Head of caudate nucleus (tissue), 42 donors: ENCODE measurements at regions of chr6 and their contacts with region 1.

Region 1: DNA sequence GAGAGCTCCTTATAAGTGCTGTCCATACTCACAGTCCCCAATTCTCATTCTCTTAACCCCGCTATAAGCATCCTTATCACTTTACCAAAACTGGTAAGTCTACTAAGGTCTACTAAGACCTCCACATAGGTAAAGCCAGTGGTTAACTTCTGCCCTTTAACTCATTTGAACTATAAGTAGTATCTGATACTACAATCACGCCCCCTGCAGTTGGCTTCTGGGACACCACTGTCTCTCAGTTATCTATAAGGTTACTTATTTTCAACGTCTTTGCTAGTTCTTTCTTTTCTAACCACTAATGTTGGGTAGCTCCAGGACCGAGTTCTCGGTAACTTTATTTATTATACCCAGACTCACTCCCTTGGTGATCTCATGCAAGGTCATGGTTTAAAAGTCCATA is 142.6 kb downstream of the ARHGAP18 start:
- DNase-seq: peak in 37 of 42 donors; percentile 5 to 70 (median 34)

Region 2: GRCh38 chr6:129498950-129499842 is 68.2 kb before region 1 on chr6:
- intact Hi-C with region 1: loop called (anchors 5 kb)
- DNase-seq: peak in 13 of 42 donors; percentile 11 to 66 (median 32)

Region 3: DNA sequence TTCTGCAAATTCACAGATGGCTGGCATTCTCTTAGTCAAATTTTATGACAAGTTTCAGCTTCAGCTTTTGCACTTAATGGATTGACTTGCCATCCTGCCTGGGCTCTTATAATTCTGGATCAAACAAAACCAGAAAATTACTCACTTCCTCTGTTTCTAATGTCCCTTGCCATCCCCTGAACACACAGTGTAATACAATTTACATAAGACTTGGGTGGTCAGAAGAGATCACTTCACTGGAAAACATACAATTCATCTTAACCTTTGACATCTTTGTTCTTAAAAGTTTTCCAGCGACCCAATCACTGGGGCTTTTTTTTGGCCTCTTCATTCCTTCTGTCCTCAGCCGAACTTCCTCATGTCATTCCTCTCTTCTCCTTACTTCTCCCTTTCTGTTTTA is 56.4 kb before region 1 on chr6:
- intact Hi-C with region 1: no loop called
- DNase-seq: no peak